Psoas muscle (tissue), 8 donors: ENCODE measurements at regions of chr1 and their contacts with region 1.

Region 1: GRCh38 chr1:119613769-119614720 is 34.0 kb downstream of the ZNF697 start:
- DNase-seq: peak; percentile 79 to 89
- ATAC-seq: peak; percentile 91 to 98 (median 94)
- H3K4me3 ChIP-seq: no peak overlapping the region
- H3K27ac ChIP-seq: no peak overlapping the region
- H3K4me1 ChIP-seq: peaks cover 11% of the 10 kb centered on the region
- H3K27me3 ChIP-seq: no peaks in the 10 kb centered on the region
- CTCF ChIP-seq: peak; percentile 81

Region 2: GRCh38 chr1:119662034-119662437 is 48.0 kb after region 1 on chr1:
- intact Hi-C with region 1: loop called in 1 of 2 experiments (anchors 5 kb)
- DNase-seq: no peak
- ATAC-seq: no peak
- H3K4me3 ChIP-seq: no peak overlapping the region
- H3K27ac ChIP-seq: no peak overlapping the region
- H3K4me1 ChIP-seq: no peaks in the 10 kb centered on the region
- H3K27me3 ChIP-seq: peaks cover 0 to 2% (median 0%) of the 10 kb centered on the region in 3 donors
- CTCF ChIP-seq: no peak

Region 3: DNA sequence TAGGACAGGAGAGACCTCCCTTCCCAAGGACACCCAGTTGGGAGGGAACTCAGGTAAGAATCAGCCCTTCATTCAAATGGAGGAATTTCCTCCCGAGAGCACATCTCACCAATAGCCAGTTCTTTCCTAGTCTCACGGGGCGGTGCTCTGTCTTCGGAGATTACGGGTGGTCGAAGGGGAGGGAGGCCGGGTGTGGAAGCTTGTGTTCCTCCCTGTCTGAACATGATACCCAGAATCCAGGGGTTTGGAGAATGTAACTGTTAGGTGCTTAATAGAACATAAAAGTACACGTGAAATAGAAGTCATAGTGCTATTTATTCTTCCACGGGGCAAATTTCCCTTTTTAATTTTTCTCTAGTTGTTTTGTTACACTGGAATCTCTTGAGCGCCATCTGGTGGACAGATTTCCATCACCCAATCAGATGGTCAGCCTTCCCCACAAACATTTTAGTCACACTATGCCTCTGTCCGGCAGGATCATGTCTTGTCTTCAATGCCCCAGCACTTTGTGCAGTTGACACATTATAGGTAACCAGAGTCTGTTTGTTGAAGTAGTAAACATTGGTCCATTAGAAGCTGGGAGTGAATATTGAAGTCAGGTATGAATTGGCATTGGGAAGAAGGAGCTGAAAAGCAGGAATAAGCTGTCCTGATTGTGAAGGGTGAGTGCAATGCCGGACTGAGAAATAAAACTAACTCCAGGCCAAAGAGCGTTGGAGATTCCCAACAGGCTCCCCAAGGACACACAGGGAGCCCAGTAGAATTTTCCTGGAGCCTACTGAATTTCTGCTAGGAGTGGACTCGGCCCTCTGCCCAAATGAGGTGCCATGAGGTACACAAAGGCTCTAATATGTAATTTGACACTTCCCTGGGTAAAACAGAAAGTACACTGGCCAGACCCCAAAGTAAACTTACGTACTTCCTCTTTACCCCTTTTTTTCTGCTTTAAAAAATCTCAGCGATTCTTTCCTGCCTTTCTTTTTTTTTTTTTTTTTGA is 61.6 kb after region 1 on chr1:
- intact Hi-C with region 1: loop called (anchors 1 to 2 kb)
- DNase-seq: peak; percentile 55 to 63
- ATAC-seq: peak; percentile 83 to 91 (median 85)
- H3K4me3 ChIP-seq: peak overlapping the region; percentile 52
- H3K27ac ChIP-seq: no peak overlapping the region
- H3K4me1 ChIP-seq: no peaks in the 10 kb centered on the region
- H3K27me3 ChIP-seq: no peaks in the 10 kb centered on the region
- CTCF ChIP-seq: peak; percentile 91